ENCODE measurements at regions of chr2 and their contacts with region 1.

Region 1: DNA sequence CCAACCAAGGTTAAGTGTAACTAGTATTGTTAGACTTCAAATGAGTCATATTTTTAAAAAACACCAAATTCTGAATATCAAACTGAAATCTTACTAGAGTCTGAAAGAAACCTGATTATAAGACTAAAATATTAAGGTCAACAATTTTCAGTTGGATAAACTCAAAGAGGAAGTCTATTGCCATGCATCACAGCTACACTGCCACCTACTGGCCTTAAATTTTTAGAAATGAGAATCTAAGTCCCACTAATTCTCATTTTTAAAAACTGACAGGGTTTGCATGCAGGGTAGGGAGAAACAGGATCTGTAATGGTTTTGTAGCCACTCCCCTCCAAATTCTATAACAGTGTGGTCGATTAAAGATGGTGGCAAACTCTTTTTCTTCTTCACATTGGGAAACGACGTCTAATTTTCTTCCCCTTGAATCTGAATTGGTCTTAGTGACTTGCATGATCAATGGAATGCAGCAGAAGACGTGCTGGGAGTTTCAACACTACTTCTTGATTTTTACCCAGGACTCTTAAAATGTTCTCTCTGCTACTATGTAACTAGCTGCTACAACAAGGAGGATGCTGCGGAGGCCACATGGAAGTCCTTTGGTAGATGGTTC is 176.1 kb upstream of the SESTD1 start:
- ATAC-seq: no peak
- H3K4me3 ChIP-seq: no peak overlapping the region
- H3K27ac ChIP-seq: no peak overlapping the region
- H3K4me1 ChIP-seq: peaks cover 6 to 20% of the 10 kb centered on the region in 2 donors

Region 2: DNA sequence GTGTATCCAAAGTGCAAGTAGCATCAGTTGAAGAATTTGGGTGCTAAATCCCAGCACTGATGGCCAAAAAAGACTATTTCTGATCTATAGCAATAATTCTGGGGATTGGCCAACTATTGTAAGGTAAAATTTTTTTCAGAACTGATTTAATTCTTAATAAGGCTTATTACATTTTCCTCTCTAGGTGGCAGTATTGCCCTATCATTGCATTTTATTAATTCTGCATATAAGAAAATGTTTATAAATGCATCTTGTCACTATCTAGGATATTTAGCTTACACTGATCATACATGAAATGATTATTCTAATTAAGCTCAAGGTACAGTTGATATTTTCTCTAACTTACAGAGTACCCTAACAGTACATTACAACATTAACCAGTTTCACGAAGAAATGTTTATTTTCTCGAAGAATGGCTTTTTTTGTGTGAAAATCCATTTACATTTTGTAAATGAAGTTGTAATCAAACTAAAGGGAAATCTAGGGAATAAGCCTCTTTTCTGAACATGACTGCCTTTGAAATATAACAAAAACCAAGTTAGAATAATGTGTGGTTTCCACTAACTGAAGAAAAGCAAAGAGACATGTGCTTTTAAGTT is 644.6 kb before region 1 on chr2:
- in situ Hi-C with region 1: loop called in 1 of 9 experiments (anchors 25 kb)
- ATAC-seq: no peak
- H3K4me3 ChIP-seq: no peak overlapping the region
- H3K27ac ChIP-seq: no peak overlapping the region
- H3K4me1 ChIP-seq: no peaks in the 10 kb centered on the region

Region 3: DNA sequence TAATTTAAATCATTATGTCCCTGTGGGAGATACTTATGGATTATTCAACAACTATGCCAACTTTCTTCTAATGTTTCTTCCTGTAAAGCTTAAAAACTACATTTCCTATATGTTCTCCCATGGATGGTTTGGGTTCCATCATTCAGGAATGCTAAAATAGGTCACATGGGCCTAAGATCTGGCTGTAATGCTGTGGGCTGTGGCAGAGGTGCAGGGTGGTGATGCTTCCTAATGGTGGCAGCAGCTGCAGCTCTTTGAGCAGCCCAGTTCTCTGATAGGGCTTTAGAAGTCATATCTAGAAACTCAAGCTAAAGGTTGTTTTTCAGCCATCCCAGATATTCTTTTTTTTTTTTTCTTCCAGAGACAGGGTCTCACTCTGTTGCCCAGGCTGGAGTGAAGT is 154.5 kb after region 1 on chr2:
- in situ Hi-C with region 1: no loop called
- ATAC-seq: peak in 2 of 8 experiments; percentile 34 to 55
- H3K4me3 ChIP-seq: no peak overlapping the region
- H3K27ac ChIP-seq: no peak overlapping the region
- H3K4me1 ChIP-seq: no peaks in the 10 kb centered on the region

Region 4: GRCh38 chr2:179773986-179774385 is 333.2 kb after region 1 on chr2:
- in situ Hi-C with region 1: no loop called
- ATAC-seq: no peak
- H3K4me3 ChIP-seq: no peak overlapping the region
- H3K27ac ChIP-seq: no peak overlapping the region
- H3K4me1 ChIP-seq: no peaks in the 10 kb centered on the region

Region 5: GRCh38 chr2:181174611-181175580 is 1734.1 kb after region 1 on chr2:
- in situ Hi-C with region 1: no loop called
- ATAC-seq: no peak
- H3K4me3 ChIP-seq: no peak overlapping the region
- H3K27ac ChIP-seq: no peak overlapping the region
- H3K4me1 ChIP-seq: no peaks in the 10 kb centered on the region